ENCODE measurements at regions of chr7 and their contacts with region 1.

Region 1: GRCh38 chr7:82729172-82730030 is 285.8 kb upstream of the CACNA2D1 start:
- DNase-seq: no peak
- ATAC-seq: peak; percentile 56; the same call in 2 of the 3 replicates
- H3K4me3 ChIP-seq: no peak overlapping the region
- H3K27ac ChIP-seq: no peak overlapping the region
- H3K4me1 ChIP-seq: no peaks in the 10 kb centered on the region
- H3K27me3 ChIP-seq: no peaks in the 10 kb centered on the region
- CTCF ChIP-seq: peak; percentile 55 to 72 (median 56)
- EP300 ChIP-seq: no peak
- POLR2A ChIP-seq: no peak
- RAD21 ChIP-seq: peak; percentile 80

Region 2: DNA sequence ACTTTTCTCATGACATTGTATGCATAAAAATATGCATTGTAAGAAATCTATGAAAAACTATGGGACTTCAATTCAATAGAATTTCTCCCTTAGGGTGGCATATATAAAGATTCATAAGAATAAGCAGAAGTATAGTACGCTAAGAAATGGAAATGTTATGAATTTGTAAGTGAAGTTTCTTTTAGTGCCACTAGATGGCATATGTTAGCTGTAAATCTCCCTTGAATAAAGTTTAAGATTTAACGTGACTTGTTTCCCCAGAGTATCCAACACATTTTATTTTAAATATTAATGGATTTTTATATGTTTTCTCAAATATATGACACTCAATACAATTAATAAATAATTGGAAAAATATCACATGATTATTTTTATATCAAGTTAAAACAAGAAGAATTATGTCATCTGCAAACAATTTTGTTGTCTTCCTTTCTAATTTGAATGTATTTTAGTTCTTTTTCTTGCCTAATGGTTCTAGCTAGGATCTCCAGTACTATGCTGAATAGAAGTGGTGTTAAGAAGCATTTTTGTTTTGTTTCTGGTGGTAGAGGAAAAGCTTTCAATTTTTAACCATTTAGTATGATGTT is 1246.7 kb before region 1 on chr7:
- CTCF ChIA-PET with region 1: interaction called, 40 read pairs
- POLR2A ChIA-PET with region 1: no interaction called
- RAD21 ChIA-PET with region 1: no interaction called
- SMC1A ChIA-PET with region 1: interaction called, 7 read pairs
- in situ Hi-C with region 1: loop called (anchors 5 kb)
- intact Hi-C with region 1: loop called (anchors 5 kb)
- DNase-seq: no peak
- ATAC-seq: peak; percentile 65
- H3K4me3 ChIP-seq: no peak overlapping the region
- H3K27ac ChIP-seq: no peak overlapping the region
- H3K4me1 ChIP-seq: no peaks in the 10 kb centered on the region
- H3K27me3 ChIP-seq: no peaks in the 10 kb centered on the region
- CTCF ChIP-seq: peak; percentile 36 to 58 (median 43); a peak in 4 of 6 replicates
- EP300 ChIP-seq: no peak
- POLR2A ChIP-seq: no peak
- RAD21 ChIP-seq: peak; percentile 53; the same call in 1 of the 2 replicates

Region 3: DNA sequence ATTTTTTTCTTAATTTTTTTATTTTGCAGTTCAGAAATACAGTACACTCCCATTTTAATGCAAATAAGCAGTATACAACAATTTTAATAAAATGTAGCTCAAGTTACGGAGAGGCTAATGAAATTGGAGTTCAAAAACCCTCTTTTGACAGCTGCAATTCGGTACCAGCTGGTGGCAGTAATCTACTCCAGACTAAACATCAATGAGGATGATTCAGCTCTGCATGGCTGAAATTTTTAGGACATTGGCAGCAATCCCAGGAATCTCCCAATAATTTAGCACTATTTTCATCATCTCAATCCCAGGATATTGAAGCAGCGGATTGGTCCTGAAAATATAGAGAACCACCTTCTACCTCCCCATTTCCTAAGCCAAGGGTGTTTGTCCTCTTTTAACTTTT is 564.6 kb before region 1 on chr7:
- CTCF ChIA-PET with region 1: no interaction called
- POLR2A ChIA-PET with region 1: no interaction called
- RAD21 ChIA-PET with region 1: no interaction called
- SMC1A ChIA-PET with region 1: interaction called, 3 read pairs
- in situ Hi-C with region 1: no loop called
- intact Hi-C with region 1: loop called (anchors 5 kb)
- DNase-seq: no peak
- ATAC-seq: peak; percentile 48; the same call in 2 of the 3 replicates
- H3K4me3 ChIP-seq: no peak overlapping the region
- H3K27ac ChIP-seq: no peak overlapping the region
- H3K4me1 ChIP-seq: no peaks in the 10 kb centered on the region
- H3K27me3 ChIP-seq: no peaks in the 10 kb centered on the region
- CTCF ChIP-seq: no peak; a peak in 1 of 6 replicates
- EP300 ChIP-seq: no peak
- POLR2A ChIP-seq: no peak
- RAD21 ChIP-seq: 0 out of 2 replicates have a peak, but pooled peaks have one; percentile 8

Region 4: GRCh38 chr7:82221152-82221674 is 508.2 kb before region 1 on chr7:
- CTCF ChIA-PET with region 1: no interaction called
- POLR2A ChIA-PET with region 1: no interaction called
- RAD21 ChIA-PET with region 1: no interaction called
- SMC1A ChIA-PET with region 1: no interaction called
- in situ Hi-C with region 1: loop called (anchors 10 kb)
- intact Hi-C with region 1: no loop called
- DNase-seq: no peak
- ATAC-seq: no peak
- H3K4me3 ChIP-seq: no peak overlapping the region
- H3K27ac ChIP-seq: no peak overlapping the region
- H3K4me1 ChIP-seq: no peaks in the 10 kb centered on the region
- H3K27me3 ChIP-seq: no peaks in the 10 kb centered on the region
- CTCF ChIP-seq: no peak
- EP300 ChIP-seq: no peak
- POLR2A ChIP-seq: no peak
- RAD21 ChIP-seq: no peak

Region 5: GRCh38 chr7:82234457-82235049 is 494.8 kb before region 1 on chr7:
- CTCF ChIA-PET with region 1: no interaction called
- POLR2A ChIA-PET with region 1: no interaction called
- RAD21 ChIA-PET with region 1: no interaction called
- SMC1A ChIA-PET with region 1: interaction called, 3 read pairs
- in situ Hi-C with region 1: loop called (anchors 10 kb)
- intact Hi-C with region 1: loop called (anchors 1 kb)
- DNase-seq: no peak
- ATAC-seq: peak; percentile 60
- H3K4me3 ChIP-seq: no peak overlapping the region
- H3K27ac ChIP-seq: no peak overlapping the region
- H3K4me1 ChIP-seq: no peaks in the 10 kb centered on the region
- H3K27me3 ChIP-seq: no peaks in the 10 kb centered on the region
- CTCF ChIP-seq: peak; percentile 34 to 51 (median 49); a peak in 5 of 6 replicates
- EP300 ChIP-seq: no peak
- POLR2A ChIP-seq: no peak
- RAD21 ChIP-seq: peak; percentile 69